ENCODE measurements at regions of chr10 and their contacts with region 1.

Region 1: GRCh38 chr10:49518982-49519578 is 19.8 kb downstream of the ERCC6 start:
- DNase-seq: no peak
- ATAC-seq: peak; percentile 69 to 74
- H3K4me3 ChIP-seq: no peak overlapping the region
- H3K27ac ChIP-seq: no peak overlapping the region
- H3K4me1 ChIP-seq: peaks cover 19 to 26% of the 10 kb centered on the region in 2 donors
- H3K27me3 ChIP-seq: no peaks in the 10 kb centered on the region
- CTCF ChIP-seq: peak; percentile 58 to 69 (median 64)
- POLR2A ChIP-seq: no peak

Region 2: DNA sequence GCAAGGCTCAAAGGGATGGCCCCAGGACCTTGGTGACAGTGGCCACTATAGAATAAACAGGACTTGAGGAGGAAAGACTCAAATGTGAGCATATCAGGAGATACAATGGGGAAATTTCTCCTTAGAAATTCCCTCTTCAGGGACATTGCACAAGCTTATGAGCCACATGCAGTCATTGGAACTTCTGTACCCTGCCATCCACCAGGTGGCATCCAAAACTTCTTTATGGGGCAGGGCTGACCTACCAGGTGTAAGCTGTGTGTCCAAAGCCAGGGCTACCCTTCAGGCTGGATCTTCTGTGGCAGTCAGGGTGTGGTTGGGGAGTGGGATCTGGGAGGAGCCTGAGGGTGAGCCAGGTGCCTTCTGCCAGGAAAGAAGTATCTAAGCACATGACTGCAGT is 542.9 kb before region 1 on chr10:
- in situ Hi-C with region 1: loop called (anchors 10 to 25 kb)
- intact Hi-C with region 1: loop called (anchors 5 kb)
- DNase-seq: no peak
- ATAC-seq: no peak
- H3K4me3 ChIP-seq: no peak overlapping the region
- H3K27ac ChIP-seq: no peak overlapping the region
- H3K4me1 ChIP-seq: no peaks in the 10 kb centered on the region
- H3K27me3 ChIP-seq: no peaks in the 10 kb centered on the region
- CTCF ChIP-seq: peak in 1 of 5 experiments; percentile 35
- POLR2A ChIP-seq: no peak

Region 3: DNA sequence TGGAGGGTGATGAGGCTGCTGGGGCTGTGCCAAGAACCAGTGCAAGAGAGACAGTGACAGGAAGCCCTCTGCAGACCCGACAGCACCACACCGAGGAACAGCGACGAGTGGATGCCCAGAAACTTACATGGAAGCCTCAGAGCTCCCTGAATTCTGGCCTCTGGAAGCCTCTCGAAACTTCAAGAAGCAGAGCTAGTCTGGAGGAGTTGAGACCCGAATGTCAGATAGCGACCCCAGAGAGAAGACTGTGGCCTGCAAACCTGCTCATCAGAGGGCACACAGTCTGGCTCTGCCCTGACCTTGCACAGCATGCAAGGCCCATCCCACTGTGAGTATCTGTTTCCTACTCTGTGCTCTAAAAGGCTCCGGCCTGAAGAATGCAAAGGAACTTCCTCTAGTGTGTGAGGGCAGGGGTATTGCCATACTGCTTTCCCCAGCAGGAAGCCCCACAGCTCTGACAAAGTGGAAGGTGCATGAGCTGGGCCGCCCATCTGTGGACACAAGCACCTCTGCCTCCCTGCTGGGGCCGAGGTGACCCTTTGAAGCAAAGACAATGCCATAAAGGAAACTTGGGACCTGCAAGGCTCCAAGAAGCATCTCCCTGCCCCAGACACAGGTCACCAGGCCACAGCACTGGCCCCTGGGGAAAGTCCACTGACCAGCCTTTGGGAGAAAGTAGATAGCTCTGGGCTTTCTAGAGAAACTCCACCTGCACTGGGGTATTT is 230.6 kb before region 1 on chr10:
- in situ Hi-C with region 1: no loop called
- intact Hi-C with region 1: no loop called
- DNase-seq: no peak
- ATAC-seq: peak in 1 of 2 donors; percentile 40
- H3K4me3 ChIP-seq: no peak overlapping the region
- H3K27ac ChIP-seq: peak overlapping the region; percentile 79 to 100 (median 90)
- H3K4me1 ChIP-seq: peaks cover 43 to 61% of the 10 kb centered on the region in 2 donors
- H3K27me3 ChIP-seq: no peaks in the 10 kb centered on the region
- CTCF ChIP-seq: no peak
- POLR2A ChIP-seq: no peak

Region 4: GRCh38 chr10:49407552-49408137 is 111.4 kb before region 1 on chr10:
- in situ Hi-C with region 1: loop called in 3 of 4 experiments (anchors 10 to 25 kb)
- intact Hi-C with region 1: loop called (anchors 1 kb)
- DNase-seq: peak; percentile 31 to 48
- ATAC-seq: peak; percentile 80 to 91
- H3K4me3 ChIP-seq: no peak overlapping the region
- H3K27ac ChIP-seq: no peak overlapping the region
- H3K4me1 ChIP-seq: no peaks in the 10 kb centered on the region
- H3K27me3 ChIP-seq: peaks cover 0 to 4% (median 0%) of the 10 kb centered on the region in 3 donors
- CTCF ChIP-seq: peak; percentile 58 to 86 (median 74)
- POLR2A ChIP-seq: no peak

Region 5: DNA sequence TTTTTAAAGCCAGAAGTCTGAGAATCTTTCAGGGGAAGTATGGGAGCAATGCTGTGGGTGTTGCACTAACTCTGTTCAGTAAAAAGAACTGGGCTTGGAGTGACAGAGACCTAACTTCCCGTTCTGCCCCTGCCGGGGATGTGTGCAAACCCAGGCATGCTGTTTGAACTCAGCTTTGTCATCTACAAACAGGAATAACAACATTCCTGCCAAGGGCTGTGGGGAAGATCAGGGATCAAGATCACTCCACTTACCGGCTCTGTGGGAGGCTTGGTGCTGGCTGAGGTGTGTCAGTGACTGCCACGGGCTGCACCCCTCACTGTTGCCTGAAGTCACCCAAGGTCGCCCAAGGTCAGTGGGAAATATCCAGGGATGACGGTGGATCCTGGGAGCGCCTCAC is 100.1 kb before region 1 on chr10:
- in situ Hi-C with region 1: loop called in 3 of 4 experiments (anchors 10 to 25 kb)
- intact Hi-C with region 1: no loop called
- DNase-seq: no peak
- ATAC-seq: no peak
- H3K4me3 ChIP-seq: no peak overlapping the region
- H3K27ac ChIP-seq: no peak overlapping the region
- H3K4me1 ChIP-seq: no peaks in the 10 kb centered on the region
- H3K27me3 ChIP-seq: no peaks in the 10 kb centered on the region
- CTCF ChIP-seq: no peak
- POLR2A ChIP-seq: no peak

Measured in gastrocnemius medialis (tissue), 4 donors.